ENCODE measurements at regions of chr3 and their contacts with region 1.

Region 1: DNA sequence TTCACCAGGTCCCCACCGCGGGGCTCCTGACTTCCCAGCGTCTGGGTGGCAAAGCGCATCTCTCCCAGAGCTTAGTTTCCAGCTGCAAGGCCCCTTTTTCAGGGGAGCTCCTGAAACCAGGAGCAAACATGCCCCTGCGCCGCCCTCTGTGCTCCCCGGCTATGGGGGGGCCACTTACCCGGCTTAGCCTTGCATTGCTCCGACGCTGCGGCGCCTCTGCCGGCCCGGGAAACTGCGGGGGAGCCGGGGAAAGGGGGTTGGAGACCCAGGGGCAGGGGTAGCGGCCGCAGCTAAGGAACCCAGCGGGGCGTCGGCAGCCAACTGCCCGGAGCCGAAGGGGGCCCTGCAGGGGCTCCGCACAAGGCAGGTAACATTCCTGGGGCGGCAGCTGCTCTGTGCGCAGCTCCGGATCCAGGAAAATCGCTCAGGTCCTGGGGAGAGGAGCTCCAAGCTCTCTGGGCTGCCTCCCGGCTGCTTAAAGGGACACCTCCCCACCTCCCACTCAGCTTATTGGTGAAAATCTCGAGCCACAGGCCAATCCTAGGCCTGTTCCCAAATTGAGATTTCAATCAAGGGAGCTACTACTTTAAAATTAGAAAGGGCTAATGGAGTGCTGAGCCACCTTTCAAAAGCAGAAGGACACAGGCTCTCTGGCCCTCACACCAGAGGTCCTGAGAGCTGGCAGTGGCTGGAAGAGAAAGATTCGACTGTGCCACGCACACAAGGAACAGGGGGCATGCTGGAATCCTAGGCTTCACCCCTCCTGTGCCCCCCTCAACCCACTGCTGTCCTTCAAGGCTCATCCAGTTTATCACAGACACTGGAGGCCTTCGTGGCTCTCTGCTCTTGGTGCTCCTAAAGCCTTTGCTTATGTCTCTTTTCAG is 42.7 kb upstream of the PRICKLE2 start:
- DNase-seq: peak; percentile 75
- H3K4me3 Mint-ChIP-seq: peak overlapping the region; percentile 86
- H3K27ac Mint-ChIP-seq: peak overlapping the region; percentile 90
- H3K4me1 Mint-ChIP-seq: peaks cover 30% of the 10 kb centered on the region
- H3K27me3 Mint-ChIP-seq: no peaks in the 10 kb centered on the region
- CTCF ChIP-seq: no peak

Region 2: DNA sequence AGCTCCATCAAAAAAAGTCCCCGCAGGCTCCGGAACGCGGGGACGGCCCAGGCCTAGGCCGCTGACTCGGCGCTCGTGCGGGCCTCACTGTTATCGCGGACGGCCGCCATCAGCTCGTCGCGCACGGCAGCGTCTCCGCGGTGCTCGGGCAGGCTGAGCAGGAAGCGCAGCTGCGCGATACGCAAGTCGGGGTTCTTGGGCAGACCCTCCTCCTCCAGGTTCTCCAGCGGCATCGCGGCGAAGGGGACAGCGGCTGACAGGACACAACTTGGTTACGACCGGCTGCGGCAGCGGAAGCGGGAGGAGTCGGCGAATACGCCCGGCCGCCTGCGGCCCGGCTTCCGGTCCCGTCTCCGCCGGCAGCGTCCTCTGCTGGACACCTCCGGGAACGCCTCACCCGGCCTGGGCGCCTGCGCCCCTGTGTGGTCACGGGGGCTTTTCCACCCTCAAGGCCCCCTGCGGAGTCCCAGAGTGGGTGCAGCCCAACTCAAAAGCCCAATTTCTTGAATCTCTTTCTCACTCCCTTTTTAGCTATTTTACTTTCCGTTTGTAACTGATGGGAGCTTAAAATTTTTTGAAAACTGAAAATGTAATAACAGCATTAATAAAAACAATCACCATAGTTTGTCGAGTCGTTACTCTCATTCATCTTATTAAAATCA is 244.6 kb before region 1 on chr3 and contains the start of gene PSMD6:
- CTCF ChIA-PET with region 1: interaction called, 7 read pairs
- POLR2A ChIA-PET with region 1: interaction called, 3 read pairs
- intact Hi-C with region 1: loop called (anchors 2 kb)
- DNase-seq: peak; percentile 81
- H3K4me3 Mint-ChIP-seq: peak within 1 kb of the TSS; percentile 80
- H3K27ac Mint-ChIP-seq: peak within 1 kb of the TSS; percentile 92
- H3K4me1 Mint-ChIP-seq: peaks cover 6% of the 10 kb centered on the region
- H3K27me3 Mint-ChIP-seq: peaks cover 11% of the 10 kb centered on the region
- CTCF ChIP-seq: peak; percentile 97
- total RNA-seq, gene PSMD6: 62.7 and 66.0 TPM in 2 replicates

Region 3: DNA sequence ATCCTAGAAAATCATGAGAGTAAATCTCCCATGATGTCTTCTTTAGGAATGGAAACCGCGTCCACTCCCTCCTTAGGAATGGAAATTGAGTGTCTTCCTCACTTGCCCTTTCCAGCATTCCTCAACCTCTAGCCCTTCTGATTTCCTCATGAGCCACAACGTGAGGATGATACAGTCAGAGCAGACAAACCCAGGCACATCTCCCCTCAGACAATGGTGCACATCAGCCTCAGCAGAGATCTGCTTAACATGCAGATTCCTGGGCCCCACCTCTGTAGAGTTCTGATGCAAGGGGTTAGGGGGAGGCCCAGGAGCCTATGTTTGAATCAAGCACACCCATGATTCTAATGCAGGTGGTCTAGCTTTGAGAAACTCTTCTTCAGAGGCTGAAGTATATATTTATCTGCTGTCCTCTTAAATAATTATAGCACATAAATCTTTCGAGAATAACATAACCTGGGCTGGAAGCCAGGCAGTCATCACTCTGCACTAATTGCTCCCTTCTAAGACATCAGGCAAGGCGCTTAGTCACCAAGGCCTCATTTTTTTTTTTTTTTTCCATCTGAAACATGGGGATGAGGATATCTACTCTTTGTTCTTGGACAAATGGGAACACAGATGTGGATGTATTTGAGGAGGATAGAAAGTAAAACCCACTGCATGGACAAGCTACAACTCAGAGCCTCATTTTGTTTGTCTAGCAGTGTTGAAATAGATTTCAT is 124.4 kb before region 1 on chr3:
- CTCF ChIA-PET with region 1: interaction called, 5 read pairs
- POLR2A ChIA-PET with region 1: interaction called, 11 read pairs
- intact Hi-C with region 1: loop called (anchors 5 kb)
- DNase-seq: peak; percentile 81
- H3K4me3 Mint-ChIP-seq: no peak overlapping the region
- H3K27ac Mint-ChIP-seq: peak overlapping the region; percentile 51
- H3K4me1 Mint-ChIP-seq: peaks cover 22% of the 10 kb centered on the region
- H3K27me3 Mint-ChIP-seq: no peaks in the 10 kb centered on the region
- CTCF ChIP-seq: no peak

Region 4: DNA sequence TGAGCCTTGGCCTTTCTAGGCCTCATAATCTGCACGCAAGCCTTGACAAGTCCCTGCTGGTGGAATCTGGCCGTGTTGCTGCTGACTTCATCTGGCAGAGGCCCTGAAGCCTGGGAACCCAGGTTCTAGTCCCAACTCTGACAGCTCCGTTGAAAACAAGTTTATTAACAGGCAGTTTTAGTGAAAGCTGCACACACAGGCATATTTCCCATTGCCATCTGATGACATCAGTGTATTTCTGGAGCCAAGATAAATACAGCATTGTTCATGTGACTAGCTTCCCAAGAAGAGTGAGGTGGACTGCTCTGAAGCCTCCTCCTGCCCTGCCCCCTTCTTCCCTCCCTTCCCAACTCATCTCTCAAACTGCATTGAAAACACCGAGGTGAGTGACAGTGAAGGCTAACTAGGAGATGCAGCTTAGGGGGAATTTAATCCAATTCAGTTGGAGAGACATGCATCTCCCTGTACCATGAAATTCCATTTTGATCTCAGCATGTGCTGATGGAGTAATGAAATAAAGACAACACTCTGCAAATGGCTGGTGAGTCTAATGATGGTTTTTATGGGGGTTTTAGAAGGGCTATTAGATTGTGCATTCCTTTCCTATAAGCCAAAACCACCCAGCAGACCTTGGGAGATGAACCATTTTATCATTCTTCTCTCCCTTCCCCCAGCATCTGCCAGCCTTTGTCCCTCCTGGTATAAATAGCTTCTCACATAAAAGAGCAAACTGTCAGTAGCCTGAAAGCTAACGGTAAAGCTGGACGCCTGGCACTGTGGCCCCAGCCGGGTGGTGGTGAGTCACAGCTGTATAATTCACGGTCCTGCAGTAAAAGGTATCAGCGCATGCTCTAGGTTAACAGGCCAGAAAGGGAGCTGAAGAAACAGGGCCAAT is 80.7 kb before region 1 on chr3:
- CTCF ChIA-PET with region 1: interaction called, 9 read pairs
- POLR2A ChIA-PET with region 1: interaction called, 71 read pairs
- intact Hi-C with region 1: loop called (anchors 1 kb)
- DNase-seq: peak; percentile 93
- H3K4me3 Mint-ChIP-seq: peak overlapping the region; percentile 62
- H3K27ac Mint-ChIP-seq: peak overlapping the region; percentile 83
- H3K4me1 Mint-ChIP-seq: peaks cover 66% of the 10 kb centered on the region
- H3K27me3 Mint-ChIP-seq: no peaks in the 10 kb centered on the region
- CTCF ChIP-seq: no peak

Region 5: GRCh38 chr3:64255516-64256315 is 12.2 kb before region 1 on chr3:
- CTCF ChIA-PET with region 1: interaction called, 8 read pairs
- POLR2A ChIA-PET with region 1: interaction called, 29 read pairs
- intact Hi-C with region 1: no loop called
- DNase-seq: no peak
- H3K4me3 Mint-ChIP-seq: no peak overlapping the region
- H3K27ac Mint-ChIP-seq: no peak overlapping the region
- H3K4me1 Mint-ChIP-seq: peaks cover 44% of the 10 kb centered on the region
- H3K27me3 Mint-ChIP-seq: no peaks in the 10 kb centered on the region
- CTCF ChIP-seq: no peak

Region 6: GRCh38 chr3:64321747-64322146 is 53.8 kb after region 1 on chr3:
- CTCF ChIA-PET with region 1: interaction called, 4 read pairs
- POLR2A ChIA-PET with region 1: interaction called, 14 read pairs
- intact Hi-C with region 1: no loop called
- DNase-seq: peak; percentile 59
- H3K4me3 Mint-ChIP-seq: no peak overlapping the region
- H3K27ac Mint-ChIP-seq: peak overlapping the region; percentile 0
- H3K4me1 Mint-ChIP-seq: peaks cover 24% of the 10 kb centered on the region
- H3K27me3 Mint-ChIP-seq: no peaks in the 10 kb centered on the region
- CTCF ChIP-seq: no peak

Region 7: GRCh38 chr3:64355401-64355807 is 87.4 kb after region 1 on chr3:
- CTCF ChIA-PET with region 1: interaction called, 6 read pairs
- POLR2A ChIA-PET with region 1: interaction called, 12 read pairs
- intact Hi-C with region 1: loop called (anchors 2 kb)
- DNase-seq: no peak
- H3K4me3 Mint-ChIP-seq: no peak overlapping the region
- H3K27ac Mint-ChIP-seq: no peak overlapping the region
- H3K4me1 Mint-ChIP-seq: peaks cover 41% of the 10 kb centered on the region
- H3K27me3 Mint-ChIP-seq: no peaks in the 10 kb centered on the region
- CTCF ChIP-seq: no peak